K562 (cell line): ENCODE measurements at regions of chr6 and their contacts with region 1.

Region 1: DNA sequence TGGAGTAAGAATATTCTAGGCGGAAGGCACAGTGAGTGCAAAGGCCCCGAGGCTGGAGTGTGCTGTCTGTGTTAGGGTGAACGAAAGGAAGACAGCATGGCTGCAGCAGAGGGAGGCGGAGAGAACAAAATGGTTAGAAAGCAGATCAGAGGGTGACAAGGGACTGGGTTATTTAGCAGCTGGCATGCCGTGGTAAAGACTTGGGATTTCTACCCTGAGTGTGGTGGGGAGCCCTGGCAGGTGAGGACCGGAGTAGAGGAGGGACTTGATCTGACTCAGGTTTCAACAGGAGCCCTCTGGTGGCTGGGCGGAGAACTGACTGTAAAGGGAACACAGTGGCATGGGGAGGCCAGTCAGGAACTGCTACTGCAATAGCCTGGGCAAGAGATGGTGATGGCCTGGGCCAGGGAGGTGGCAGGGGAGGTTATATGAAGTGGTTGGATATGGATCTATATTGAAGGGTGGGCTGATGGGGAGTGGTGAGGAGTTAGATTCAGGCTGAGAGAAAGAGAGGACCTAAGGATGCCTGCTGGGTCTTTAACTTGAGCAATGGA is 38.0 kb downstream of the PIM1 start:
- DNase-seq: peak; percentile 88 to 97 (median 90)
- ATAC-seq: peak; percentile 83
- H3K4me3 ChIP-seq: no peak overlapping the region
- H3K27ac ChIP-seq: peak overlapping the region; percentile 7; the same call in 2 of the 3 replicates
- H3K4me1 ChIP-seq: peaks cover 60 to 72% of the 10 kb centered on the region in 2 experiments
- H3K27me3 ChIP-seq: no peaks in the 10 kb centered on the region
- CTCF ChIP-seq: peak; percentile 94 to 98 (median 94)
- EP300 ChIP-seq: peak; percentile 34; the same call in 1 of the 2 replicates
- POLR2A ChIP-seq: no peak
- RAD21 ChIP-seq: peak; percentile 95 to 98

Region 2: GRCh38 chr6:36765594-36766398 is 442.2 kb before region 1 on chr6:
- CTCF ChIA-PET with region 1: interaction called, 4 read pairs
- POLR2A ChIA-PET with region 1: no interaction called
- in situ Hi-C with region 1: loop called (anchors 5 kb)
- intact Hi-C with region 1: loop called (anchors 5 kb)
- DNase-seq: peak; percentile 88 to 92 (median 91)
- ATAC-seq: peak; percentile 97
- H3K4me3 ChIP-seq: no peak overlapping the region
- H3K27ac ChIP-seq: no peak overlapping the region
- H3K4me1 ChIP-seq: peaks cover 15 to 19% of the 10 kb centered on the region in 2 experiments; a peak in 3 of 5 replicates
- H3K27me3 ChIP-seq: peaks cover 20 to 33% of the 10 kb centered on the region in 2 experiments; a peak in 4 of 5 replicates
- CTCF ChIP-seq: peak; percentile 97 to 99 (median 99)
- EP300 ChIP-seq: peak; percentile 16; the same call in 1 of the 2 replicates
- POLR2A ChIP-seq: no peak
- RAD21 ChIP-seq: peak; percentile 99 to 100

Region 3: GRCh38 chr6:36839749-36840431 is 368.1 kb before region 1 on chr6:
- CTCF ChIA-PET with region 1: no interaction called
- POLR2A ChIA-PET with region 1: no interaction called
- in situ Hi-C with region 1: no loop called
- intact Hi-C with region 1: no loop called
- DNase-seq: peak; percentile 68 to 89 (median 83)
- ATAC-seq: peak; percentile 86
- H3K4me3 ChIP-seq: peak overlapping the region; percentile 38
- H3K27ac ChIP-seq: no peak overlapping the region
- H3K4me1 ChIP-seq: peaks cover 20 to 36% of the 10 kb centered on the region in 2 experiments
- H3K27me3 ChIP-seq: peaks cover 6 to 9% of the 10 kb centered on the region in 2 experiments; a peak in 3 of 5 replicates
- CTCF ChIP-seq: peak; percentile 5 to 61 (median 41); a peak in 5 of 6 replicates
- EP300 ChIP-seq: no peak
- POLR2A ChIP-seq: no peak
- RAD21 ChIP-seq: 0 out of 4 replicates have a peak, but pooled peaks of 1 of the 2 experiments have one; percentile 18

Region 4: GRCh38 chr6:37029249-37029971 is 178.6 kb before region 1 on chr6:
- CTCF ChIA-PET with region 1: interaction called, 204 read pairs
- POLR2A ChIA-PET with region 1: interaction called, 12 read pairs
- in situ Hi-C with region 1: loop called (anchors 5 kb)
- intact Hi-C with region 1: loop called (anchors 1 kb)
- DNase-seq: peak; percentile 91 to 97 (median 94)
- ATAC-seq: peak; percentile 99
- H3K4me3 ChIP-seq: no peak overlapping the region
- H3K27ac ChIP-seq: peak overlapping the region; percentile 46
- H3K4me1 ChIP-seq: peaks cover 15 to 63% of the 10 kb centered on the region in 2 experiments
- H3K27me3 ChIP-seq: no peaks in the 10 kb centered on the region
- CTCF ChIP-seq: peak; percentile 96 to 99 (median 97)
- EP300 ChIP-seq: peak; percentile 76
- POLR2A ChIP-seq: no peak
- RAD21 ChIP-seq: peak; percentile 99 to 100

Region 5: GRCh38 chr6:37169496-37170272 is 38.3 kb before region 1 on chr6 and contains the start of gene PIM1:
- CTCF ChIA-PET with region 1: interaction called, 23 read pairs
- POLR2A ChIA-PET with region 1: interaction called, 67 read pairs
- in situ Hi-C with region 1: loop called (anchors 5 kb)
- intact Hi-C with region 1: no loop called
- DNase-seq: peak; percentile 98 to 100 (median 99)
- ATAC-seq: peak; percentile 79
- H3K4me3 ChIP-seq: peak within 1 kb of the TSS; percentile 97
- H3K27ac ChIP-seq: peak within 1 kb of the TSS; percentile 91
- H3K4me1 ChIP-seq: peaks cover 7 to 29% of the 10 kb centered on the region in 2 experiments; a peak in 4 of 5 replicates
- H3K27me3 ChIP-seq: no peaks in the 10 kb centered on the region
- CTCF ChIP-seq: peak in 1 of 3 experiments; percentile 10; a peak in 2 of 6 replicates
- EP300 ChIP-seq: peak; percentile 51
- POLR2A ChIP-seq: peak; percentile 51; the same call in 1 of the 2 replicates
- RAD21 ChIP-seq: peak; percentile 2 to 12; a peak in 3 of 4 replicates
- polyA plus RNA-seq, gene PIM1: 19.0 to 62.4 TPM

Region 6: DNA sequence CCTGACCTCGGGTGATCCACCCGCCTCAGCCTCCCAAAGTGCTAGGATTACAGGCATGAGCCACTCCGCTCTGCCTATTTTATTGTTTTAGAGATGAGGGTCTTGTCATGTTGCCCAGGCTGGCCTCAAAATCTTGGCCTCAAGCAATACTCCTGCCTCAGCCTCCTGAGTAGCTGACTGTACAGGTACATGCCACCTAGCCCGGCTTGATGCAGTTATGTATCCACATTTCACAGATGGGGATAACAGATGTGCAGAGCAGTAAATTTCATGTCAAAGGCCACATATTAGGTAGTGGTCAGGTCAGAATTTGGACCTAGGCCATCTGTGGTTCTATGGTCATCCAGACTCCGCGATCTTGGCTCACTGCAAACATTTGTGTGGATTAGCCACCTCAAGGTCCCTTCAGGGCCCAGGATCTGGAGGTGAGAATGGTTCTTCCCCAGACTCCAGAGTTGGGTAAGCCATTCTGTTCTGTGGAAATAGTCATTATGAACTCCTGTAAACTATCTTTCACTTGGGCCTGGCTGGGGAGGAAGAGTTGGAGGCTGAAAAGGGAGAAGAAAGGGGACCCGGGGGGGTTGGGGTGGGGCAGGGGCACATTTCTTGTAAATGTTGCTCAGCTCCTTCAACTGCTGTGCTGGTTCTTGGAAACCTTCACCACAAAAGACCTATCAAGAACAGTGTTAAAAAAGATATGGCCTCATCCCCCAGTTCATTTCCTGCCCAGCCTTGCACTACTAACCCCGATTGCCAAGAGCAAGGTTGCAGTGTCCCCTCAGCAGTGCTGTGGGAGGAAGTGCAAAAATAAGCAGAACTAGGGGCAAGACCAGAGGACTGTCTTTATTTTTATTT is 25.0 kb before region 1 on chr6:
- CTCF ChIA-PET with region 1: no interaction called
- POLR2A ChIA-PET with region 1: interaction called, 67 read pairs
- in situ Hi-C with region 1: no loop called
- intact Hi-C with region 1: loop called (anchors 1 kb)
- DNase-seq: peak; percentile 65 to 99 (median 78)
- ATAC-seq: peak; percentile 90
- H3K4me3 ChIP-seq: no peak overlapping the region
- H3K27ac ChIP-seq: peak overlapping the region; percentile 97
- H3K4me1 ChIP-seq: peaks cover 58 to 65% of the 10 kb centered on the region in 2 experiments
- H3K27me3 ChIP-seq: no peaks in the 10 kb centered on the region
- CTCF ChIP-seq: no peak
- EP300 ChIP-seq: peak; percentile 100
- POLR2A ChIP-seq: peak; percentile 60
- RAD21 ChIP-seq: peak; percentile 29 to 43; a peak in 3 of 4 replicates

Region 7: DNA sequence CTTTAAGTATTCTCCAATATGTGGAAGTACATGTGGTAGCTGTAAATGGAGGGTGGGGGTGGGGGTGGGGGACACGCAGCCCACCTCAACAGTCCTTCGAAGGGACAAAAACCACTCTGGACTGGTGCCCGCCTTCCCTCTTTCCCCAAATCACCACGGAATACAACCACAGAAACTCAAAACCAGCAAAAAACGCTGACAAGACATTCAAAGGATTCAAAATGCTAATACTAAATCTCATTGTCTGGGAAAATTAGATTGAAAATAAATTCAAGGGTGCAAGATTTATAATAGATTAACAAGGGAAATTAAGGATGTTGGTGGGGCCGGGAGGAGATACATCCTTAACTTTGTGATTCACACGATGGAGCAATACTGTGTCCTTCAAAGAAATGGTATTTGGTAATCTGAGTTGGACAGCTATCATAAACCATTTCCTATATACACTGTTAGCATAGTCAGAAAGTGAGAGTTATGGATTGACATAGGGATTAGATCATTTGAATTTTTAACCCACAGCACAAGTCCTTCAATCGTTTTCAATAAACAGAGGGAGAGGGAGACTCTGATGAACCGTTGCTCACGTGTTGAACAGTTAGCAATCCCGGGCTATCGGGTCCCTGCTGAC is 48.8 kb after region 1 on chr6:
- CTCF ChIA-PET with region 1: no interaction called
- POLR2A ChIA-PET with region 1: no interaction called
- in situ Hi-C with region 1: no loop called
- intact Hi-C with region 1: no loop called
- DNase-seq: no peak
- ATAC-seq: no peak
- H3K4me3 ChIP-seq: peak overlapping the region; percentile 91
- H3K27ac ChIP-seq: peak overlapping the region; percentile 46; the same call in 2 of the 3 replicates
- H3K4me1 ChIP-seq: peaks cover 7 to 11% of the 10 kb centered on the region in 2 experiments; a peak in 3 of 5 replicates
- H3K27me3 ChIP-seq: no peaks in the 10 kb centered on the region
- CTCF ChIP-seq: no peak
- EP300 ChIP-seq: no peak
- POLR2A ChIP-seq: no peak
- RAD21 ChIP-seq: no peak

Region 8: GRCh38 chr6:37314487-37315156 is 106.6 kb after region 1 on chr6:
- CTCF ChIA-PET with region 1: interaction called, 4 read pairs
- POLR2A ChIA-PET with region 1: interaction called, 4 read pairs
- in situ Hi-C with region 1: loop called (anchors 5 kb)
- intact Hi-C with region 1: loop called (anchors 1 kb)
- DNase-seq: peak; percentile 95 to 99 (median 98)
- ATAC-seq: peak; percentile 96
- H3K4me3 ChIP-seq: no peak overlapping the region
- H3K27ac ChIP-seq: peak overlapping the region; percentile 79
- H3K4me1 ChIP-seq: peaks cover 21 to 38% of the 10 kb centered on the region in 2 experiments
- H3K27me3 ChIP-seq: no peaks in the 10 kb centered on the region
- CTCF ChIP-seq: peak; percentile 95 to 99 (median 99)
- EP300 ChIP-seq: peak; percentile 99
- POLR2A ChIP-seq: no peak
- RAD21 ChIP-seq: peak; percentile 97

Region 9: DNA sequence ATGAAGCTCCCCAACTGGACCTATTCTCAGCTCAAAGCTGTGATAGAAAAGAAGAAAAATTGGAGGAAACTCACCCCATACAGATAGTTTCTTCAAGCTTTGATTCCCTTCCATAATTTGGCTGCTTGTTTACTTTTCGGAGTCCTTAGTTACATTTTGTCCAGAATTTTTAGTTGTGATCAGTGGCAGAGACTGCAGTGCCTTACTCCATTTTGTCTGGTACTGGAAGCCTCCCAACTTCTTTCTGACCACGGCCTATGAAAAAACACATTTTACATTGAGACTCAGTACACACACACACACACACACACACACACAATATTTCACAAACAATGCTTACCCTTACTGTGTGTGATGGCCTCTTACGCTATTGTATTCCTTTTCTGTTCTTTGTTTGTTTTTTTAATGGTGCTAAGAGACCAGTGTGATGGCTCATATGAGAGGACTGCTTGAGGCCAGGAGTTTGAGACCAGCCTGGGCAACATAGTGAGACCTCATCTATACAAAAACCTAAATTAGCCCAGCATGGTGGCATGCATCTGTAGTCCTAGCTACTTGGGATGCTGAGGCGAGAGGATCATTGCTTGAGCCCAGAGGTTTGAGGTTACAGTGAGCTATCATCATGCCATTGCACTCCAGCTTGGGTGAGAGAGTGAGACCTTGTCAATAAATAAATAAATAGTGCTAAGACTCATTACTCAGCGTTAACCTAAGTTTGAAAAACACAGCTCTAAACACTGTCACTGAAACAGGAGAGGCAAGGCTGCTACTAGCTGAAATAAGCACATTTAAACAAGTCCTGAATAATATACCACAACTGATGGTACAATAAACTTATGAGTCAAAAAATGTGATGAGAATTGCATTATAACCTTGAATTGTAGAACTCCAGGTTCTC is 132.0 kb after region 1 on chr6:
- CTCF ChIA-PET with region 1: no interaction called
- POLR2A ChIA-PET with region 1: no interaction called
- in situ Hi-C with region 1: no loop called
- intact Hi-C with region 1: no loop called
- DNase-seq: no peak
- ATAC-seq: no peak
- H3K4me3 ChIP-seq: no peak overlapping the region
- H3K27ac ChIP-seq: no peak overlapping the region
- H3K4me1 ChIP-seq: no peaks in the 10 kb centered on the region
- H3K27me3 ChIP-seq: peaks cover 11 to 12% of the 10 kb centered on the region in 2 experiments; a peak in 3 of 5 replicates
- CTCF ChIP-seq: no peak
- EP300 ChIP-seq: no peak
- POLR2A ChIP-seq: no peak
- RAD21 ChIP-seq: no peak